ENCODE measurements at regions of chr13 and their contacts with region 1.

Region 1: GRCh38 chr13:60356970-60357369 is 40.0 kb upstream of the TDRD3 start:
- H3K4me3 ChIP-seq: no peak overlapping the region
- H3K27ac ChIP-seq: no peak overlapping the region
- H3K4me1 ChIP-seq: no peaks in the 10 kb centered on the region
- CTCF ChIP-seq: no peak

Region 2: DNA sequence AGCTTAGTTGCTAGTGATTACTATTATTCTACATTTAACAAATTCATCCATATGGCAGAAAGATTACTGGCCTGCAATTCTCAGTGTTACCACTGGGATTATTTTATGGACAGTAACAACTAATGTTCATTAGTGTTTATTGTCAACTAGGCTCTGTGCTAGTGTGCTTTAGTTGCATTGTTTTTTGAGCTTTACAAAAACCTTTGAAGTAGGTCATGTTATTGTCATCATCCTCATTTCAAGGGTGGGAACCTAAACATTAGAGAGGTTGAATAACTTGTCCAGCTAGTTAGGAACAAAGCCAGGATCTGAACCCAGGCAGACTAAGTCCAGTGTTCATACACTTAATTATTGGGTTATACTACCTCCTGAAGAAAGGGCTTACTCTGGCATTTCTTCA is 12.3 kb after region 1 on chr13:
- CTCF ChIA-PET with region 1: interaction called, 10 read pairs
- POLR2A ChIA-PET with region 1: no interaction called
- H3K4me3 ChIP-seq: no peak overlapping the region
- H3K27ac ChIP-seq: no peak overlapping the region
- H3K4me1 ChIP-seq: no peaks in the 10 kb centered on the region
- CTCF ChIP-seq: no peak

Measured in HEK293 (cell line).